ENCODE measurements at regions of chr7 and their contacts with region 1.

Region 1: DNA sequence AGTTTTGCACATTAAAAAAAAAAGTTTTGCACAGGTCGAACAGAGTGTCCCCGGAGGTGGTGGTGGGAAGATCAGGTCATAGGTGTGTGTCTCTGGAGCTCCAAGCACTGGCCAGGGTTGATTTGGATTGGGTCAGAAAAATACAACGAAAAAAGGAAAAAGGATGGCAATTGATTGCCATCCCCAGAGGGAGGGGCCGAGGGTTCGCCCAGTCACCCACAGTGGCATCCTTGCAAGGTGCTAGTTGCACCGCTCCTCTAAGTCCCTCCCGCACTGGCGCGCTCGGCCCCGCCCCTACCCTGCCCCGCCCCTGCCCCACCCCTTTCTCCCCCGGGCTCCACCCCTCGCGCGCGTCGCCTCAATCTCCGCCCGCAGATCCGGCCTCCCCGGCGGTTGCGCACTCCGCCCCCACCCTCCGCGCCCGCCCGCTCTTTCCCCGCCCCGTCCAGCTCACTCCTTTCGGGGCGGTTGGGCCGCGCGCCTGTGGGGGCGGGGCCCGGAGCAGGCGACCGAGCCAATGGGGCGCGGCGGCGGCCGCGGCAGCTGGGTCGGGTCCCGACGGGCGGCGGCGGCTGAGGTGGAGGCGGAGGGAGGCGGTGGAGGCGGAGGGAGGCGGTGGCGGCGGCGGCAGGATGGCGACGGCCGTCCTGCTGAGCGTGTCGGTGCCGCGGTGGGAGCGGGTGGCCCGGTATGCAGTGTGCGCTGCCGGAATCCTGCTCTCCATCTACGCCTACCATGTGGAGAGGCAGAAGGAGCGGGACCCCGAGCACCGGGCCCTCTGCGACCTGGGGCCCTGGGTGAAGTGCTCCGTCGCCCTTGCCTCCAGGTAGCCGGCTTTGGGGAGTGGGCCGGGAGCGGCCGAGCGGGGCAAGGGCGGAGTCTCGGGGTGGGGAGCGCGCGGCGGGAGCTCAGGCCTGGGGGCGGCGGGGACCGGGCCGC is 31.5 kb upstream of the ERV3-1 start:
- DNase-seq: peak; percentile 91
- ATAC-seq: peak; percentile 94
- H3K4me3 Mint-ChIP-seq: peak overlapping the region; percentile 74
- H3K27ac Mint-ChIP-seq: peak overlapping the region; percentile 77
- H3K4me1 Mint-ChIP-seq: peaks cover 12% of the 10 kb centered on the region
- H3K27me3 Mint-ChIP-seq: no peaks in the 10 kb centered on the region
- CTCF ChIP-seq: no peak

Region 2: DNA sequence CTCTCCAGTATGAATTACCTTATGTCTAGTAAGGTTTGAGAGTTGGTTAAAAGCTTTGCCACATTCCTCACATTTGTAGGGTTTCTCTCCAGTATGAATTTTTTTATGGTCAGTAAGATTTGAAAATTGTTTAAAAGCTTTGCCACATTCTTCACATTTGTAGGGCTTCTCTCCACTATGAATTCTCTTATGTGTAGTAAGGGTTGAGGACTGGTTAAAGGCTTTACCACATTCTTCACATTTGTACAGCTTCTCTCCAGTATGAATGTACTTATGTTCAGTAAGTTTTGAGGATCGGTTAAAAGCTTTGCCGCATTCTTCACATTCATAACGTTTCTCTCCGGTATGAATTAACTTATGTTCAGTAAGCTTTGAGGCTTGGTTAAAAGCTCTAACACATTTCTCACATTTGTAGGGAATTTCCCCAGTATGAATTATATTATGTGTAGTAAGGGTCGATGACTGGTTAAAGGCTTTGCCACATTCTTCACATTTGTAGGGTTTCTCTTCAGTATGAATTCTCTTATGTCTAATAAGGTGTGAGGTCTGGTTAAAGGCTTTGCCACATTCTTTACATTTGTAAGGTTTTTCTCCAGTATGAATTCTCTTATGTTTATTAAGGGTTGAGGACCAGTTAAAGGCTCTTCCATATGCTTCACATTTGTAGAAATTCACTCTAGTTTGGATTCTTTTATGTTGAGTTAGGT is 59.4 kb before region 1 on chr7:
- CTCF ChIA-PET with region 1: no interaction called
- POLR2A ChIA-PET with region 1: no interaction called
- intact Hi-C with region 1: no loop called
- DNase-seq: no peak
- ATAC-seq: no peak
- H3K4me3 Mint-ChIP-seq: no peak overlapping the region
- H3K27ac Mint-ChIP-seq: no peak overlapping the region
- H3K4me1 Mint-ChIP-seq: no peaks in the 10 kb centered on the region
- H3K27me3 Mint-ChIP-seq: no peaks in the 10 kb centered on the region
- CTCF ChIP-seq: no peak

Region 3: DNA sequence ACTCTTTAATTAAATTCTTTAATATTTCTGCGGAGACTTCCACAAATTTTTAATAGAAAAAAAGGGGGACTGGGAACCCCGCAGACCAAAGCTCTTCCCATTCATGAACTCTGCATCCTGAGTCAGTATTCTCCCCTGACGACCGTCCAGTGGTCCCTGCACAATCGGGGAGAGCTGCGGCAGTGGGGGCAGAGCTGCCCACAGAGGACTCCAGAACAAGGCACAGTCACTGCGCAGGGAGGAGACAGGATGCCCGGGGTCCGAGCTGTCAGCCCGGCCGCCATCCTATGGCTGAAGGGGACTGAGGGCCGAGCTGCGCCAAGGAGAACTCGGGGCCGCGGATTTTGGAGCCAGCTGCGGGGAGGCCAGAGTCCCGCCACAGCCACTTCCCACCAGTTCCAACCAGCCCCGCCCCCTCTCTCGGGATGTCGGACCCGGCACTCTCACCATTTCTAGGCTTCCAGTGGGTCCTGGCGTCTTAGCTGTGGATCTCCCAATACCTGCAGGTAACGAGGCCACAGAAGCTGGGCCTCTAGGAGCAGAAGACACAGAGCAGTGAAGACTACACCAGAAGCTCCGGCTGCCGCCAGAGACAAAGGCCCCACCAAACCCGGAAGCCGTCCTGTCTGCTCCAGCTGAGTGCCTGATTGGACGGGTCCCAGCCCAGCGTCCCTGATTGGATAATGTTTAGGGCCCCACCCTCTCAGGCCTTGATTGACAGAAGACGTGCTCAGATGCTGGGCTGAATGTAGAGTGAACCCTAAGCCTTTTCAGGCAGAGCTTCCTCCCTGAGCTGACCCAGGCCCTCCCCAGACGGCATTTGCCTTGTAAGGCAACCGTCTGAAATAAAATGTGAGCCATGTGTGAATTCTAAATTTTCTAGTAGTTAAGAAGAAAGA is 31.7 kb before region 1 on chr7 and contains the start of gene ERV3-1:
- CTCF ChIA-PET with region 1: interaction called, 4 read pairs
- POLR2A ChIA-PET with region 1: no interaction called
- intact Hi-C with region 1: loop called (anchors 1 kb)
- DNase-seq: peak; percentile 97
- ATAC-seq: peak; percentile 100
- H3K4me3 Mint-ChIP-seq: peak within 1 kb of the TSS; percentile 92
- H3K27ac Mint-ChIP-seq: peak within 1 kb of the TSS; percentile 90
- H3K4me1 Mint-ChIP-seq: peaks cover 35% of the 10 kb centered on the region
- H3K27me3 Mint-ChIP-seq: no peaks in the 10 kb centered on the region
- CTCF ChIP-seq: no peak
- total RNA-seq, gene ERV3-1: 9.9 to 10.7 TPM

Measured in activated CD8-positive, alpha-beta T cell treated with anti-CD3 and anti-CD28 coated beads for 36 hours (primary cell).